IMR-90 (cell line): ENCODE measurements at regions of chr3 and their contacts with region 1.

Region 1: DNA sequence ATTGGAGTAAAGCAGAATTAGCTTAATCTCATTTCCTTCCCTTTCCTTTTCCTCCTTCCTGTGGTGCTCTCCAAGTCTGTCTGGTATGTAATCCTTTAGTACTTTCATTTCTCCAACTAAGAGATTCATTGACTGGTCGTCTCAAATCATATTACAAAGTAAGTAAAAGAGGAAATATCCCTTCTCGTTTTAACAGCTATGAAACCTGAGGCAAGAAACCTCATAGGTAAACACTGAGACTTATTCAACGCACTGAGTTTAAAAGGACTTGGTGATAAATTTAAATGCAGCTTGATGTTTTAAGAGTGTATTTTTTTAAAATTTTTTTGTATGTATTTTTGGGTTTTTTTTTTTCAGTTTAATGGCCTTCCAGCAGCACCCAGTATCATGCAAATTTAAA is 117.2 kb upstream of the LRRC3B start:
- DNase-seq: no peak
- ATAC-seq: no peak
- H3K4me3 ChIP-seq: no peak overlapping the region
- H3K27ac ChIP-seq: no peak overlapping the region
- H3K4me1 ChIP-seq: no peaks in the 10 kb centered on the region
- H3K27me3 ChIP-seq: no peaks in the 10 kb centered on the region
- CTCF ChIP-seq: no peak
- POLR2A ChIP-seq: no peak
- RAD21 ChIP-seq: no peak

Region 2: GRCh38 chr3:26522919-26523318 is 17.5 kb after region 1 on chr3:
- CTCF ChIA-PET with region 1: interaction called, 3 read pairs
- POLR2A ChIA-PET with region 1: interaction called, 21 read pairs
- dilution Hi-C with region 1: no loop called
- in situ Hi-C with region 1: no loop called
- intact Hi-C with region 1: no loop called
- DNase-seq: no peak
- ATAC-seq: no peak
- H3K4me3 ChIP-seq: no peak overlapping the region
- H3K27ac ChIP-seq: no peak overlapping the region
- H3K4me1 ChIP-seq: no peaks in the 10 kb centered on the region
- H3K27me3 ChIP-seq: no peaks in the 10 kb centered on the region
- CTCF ChIP-seq: no peak
- POLR2A ChIP-seq: no peak
- RAD21 ChIP-seq: no peak

Region 3: GRCh38 chr3:26668171-26668570 is 162.8 kb after region 1 on chr3:
- CTCF ChIA-PET with region 1: no interaction called
- POLR2A ChIA-PET with region 1: no interaction called
- dilution Hi-C with region 1: no loop called
- in situ Hi-C with region 1: no loop called
- intact Hi-C with region 1: no loop called
- DNase-seq: no peak
- ATAC-seq: no peak
- H3K4me3 ChIP-seq: no peak overlapping the region
- H3K27ac ChIP-seq: no peak overlapping the region
- H3K4me1 ChIP-seq: no peaks in the 10 kb centered on the region
- H3K27me3 ChIP-seq: no peaks in the 10 kb centered on the region
- CTCF ChIP-seq: no peak
- POLR2A ChIP-seq: no peak
- RAD21 ChIP-seq: no peak